Naive thymus-derived CD4-positive, alpha-beta T cell (primary cell): ENCODE measurements at regions of chr13 and their contacts with region 1.

Region 1: GRCh38 chr13:80029170-80029569 is 311.8 kb downstream of the SPRY2 start:
- DNase-seq: no peak
- ATAC-seq: no peak
- H3K4me3 ChIP-seq: no peak overlapping the region
- H3K4me3 Mint-ChIP-seq: no peak overlapping the region
- H3K27ac ChIP-seq: no peak overlapping the region
- H3K27ac Mint-ChIP-seq: no peak overlapping the region
- H3K4me1 ChIP-seq: no peaks in the 10 kb centered on the region
- H3K4me1 Mint-ChIP-seq: peaks cover 0 to 2% (median 0%) of the 10 kb centered on the region in 7 donors
- H3K27me3 ChIP-seq: no peaks in the 10 kb centered on the region
- H3K27me3 Mint-ChIP-seq: no peaks in the 10 kb centered on the region

Region 2: GRCh38 chr13:79973533-79973963 is 55.6 kb before region 1 on chr13:
- CTCF ChIA-PET with region 1: no interaction called
- POLR2A ChIA-PET with region 1: no interaction called
- intact Hi-C with region 1: no loop called
- DNase-seq: no peak
- ATAC-seq: no peak
- H3K4me3 ChIP-seq: no peak overlapping the region
- H3K4me3 Mint-ChIP-seq: no peak overlapping the region
- H3K27ac ChIP-seq: no peak overlapping the region
- H3K27ac Mint-ChIP-seq: no peak overlapping the region
- H3K4me1 ChIP-seq: no peaks in the 10 kb centered on the region
- H3K4me1 Mint-ChIP-seq: no peaks in the 10 kb centered on the region
- H3K27me3 ChIP-seq: no peaks in the 10 kb centered on the region
- H3K27me3 Mint-ChIP-seq: no peaks in the 10 kb centered on the region

Region 3: GRCh38 chr13:80001510-80001842 is 27.7 kb before region 1 on chr13:
- CTCF ChIA-PET with region 1: no interaction called
- POLR2A ChIA-PET with region 1: no interaction called
- intact Hi-C with region 1: no loop called
- DNase-seq: no peak
- ATAC-seq: no peak
- H3K4me3 ChIP-seq: no peak overlapping the region
- H3K4me3 Mint-ChIP-seq: no peak overlapping the region
- H3K27ac ChIP-seq: no peak overlapping the region
- H3K27ac Mint-ChIP-seq: no peak overlapping the region
- H3K4me1 ChIP-seq: no peaks in the 10 kb centered on the region
- H3K4me1 Mint-ChIP-seq: no peaks in the 10 kb centered on the region
- H3K27me3 ChIP-seq: no peaks in the 10 kb centered on the region
- H3K27me3 Mint-ChIP-seq: no peaks in the 10 kb centered on the region

Region 4: DNA sequence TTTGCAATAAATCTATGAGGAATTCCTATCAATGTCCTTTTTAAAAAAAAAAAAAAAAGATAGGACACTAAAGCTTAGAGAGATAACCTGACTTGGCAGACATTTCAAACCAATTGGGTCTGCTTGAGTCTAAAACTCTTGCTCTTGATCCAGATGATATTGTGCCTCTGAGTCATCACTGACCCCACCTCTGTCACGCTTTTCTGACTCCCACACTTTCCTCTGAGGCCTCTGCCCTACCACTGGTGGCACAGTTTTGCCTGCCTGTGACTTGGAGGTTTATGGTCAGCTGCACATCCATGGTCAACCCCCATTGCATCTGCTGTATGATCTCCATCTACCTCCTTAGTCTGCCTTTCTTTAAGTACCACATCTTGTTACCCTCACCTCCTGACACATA is 16.9 kb before region 1 on chr13:
- CTCF ChIA-PET with region 1: no interaction called
- POLR2A ChIA-PET with region 1: no interaction called
- intact Hi-C with region 1: no loop called
- DNase-seq: no peak
- ATAC-seq: no peak
- H3K4me3 ChIP-seq: no peak overlapping the region
- H3K4me3 Mint-ChIP-seq: no peak overlapping the region
- H3K27ac ChIP-seq: no peak overlapping the region
- H3K27ac Mint-ChIP-seq: no peak overlapping the region
- H3K4me1 ChIP-seq: no peaks in the 10 kb centered on the region
- H3K4me1 Mint-ChIP-seq: peaks cover 0 to 6% (median 0%) of the 10 kb centered on the region in 7 donors
- H3K27me3 ChIP-seq: no peaks in the 10 kb centered on the region
- H3K27me3 Mint-ChIP-seq: peaks cover 0 to 12% (median 5%) of the 10 kb centered on the region in 5 donors

Region 5: GRCh38 chr13:80083853-80084676 is 54.9 kb after region 1 on chr13:
- CTCF ChIA-PET with region 1: no interaction called
- POLR2A ChIA-PET with region 1: no interaction called
- intact Hi-C with region 1: loop called in 1 of 2 experiments (anchors 10 kb)
- DNase-seq: no peak
- ATAC-seq: no peak
- H3K4me3 ChIP-seq: no peak overlapping the region
- H3K4me3 Mint-ChIP-seq: no peak overlapping the region
- H3K27ac ChIP-seq: no peak overlapping the region
- H3K27ac Mint-ChIP-seq: no peak overlapping the region
- H3K4me1 ChIP-seq: no peaks in the 10 kb centered on the region
- H3K4me1 Mint-ChIP-seq: no peaks in the 10 kb centered on the region
- H3K27me3 ChIP-seq: no peaks in the 10 kb centered on the region
- H3K27me3 Mint-ChIP-seq: no peaks in the 10 kb centered on the region